ENCODE measurements at regions of chr10 and their contacts with region 1.

Region 1: GRCh38 chr10:103327906-103328305 is 23.0 kb downstream of the PCGF6 start:
- DNase-seq: no peak
- ATAC-seq: no peak
- H3K4me3 ChIP-seq: no peak overlapping the region
- H3K27ac ChIP-seq: no peak overlapping the region
- H3K4me1 ChIP-seq: no peaks in the 10 kb centered on the region
- H3K27me3 ChIP-seq: no peaks in the 10 kb centered on the region
- CTCF ChIP-seq: no peak

Region 2: DNA sequence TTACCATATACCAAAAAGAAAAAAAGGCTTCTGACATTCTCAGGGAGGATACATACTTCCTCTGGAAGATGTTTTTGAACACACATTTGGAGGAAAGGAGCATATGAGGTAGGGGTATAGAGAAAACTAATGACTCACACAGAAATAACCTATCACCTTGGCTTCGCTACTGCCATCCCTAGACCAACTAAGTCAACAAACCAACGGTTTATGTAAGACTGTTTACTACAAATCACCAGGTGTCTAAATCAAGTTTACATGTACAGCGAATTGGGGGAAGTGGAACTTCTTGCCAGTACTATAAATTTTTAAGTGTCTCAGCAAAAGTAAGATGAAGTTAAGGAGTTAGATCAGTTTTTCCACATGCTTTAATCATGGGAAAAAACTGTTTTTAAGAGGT is 231.8 kb before region 1 on chr10:
- intact Hi-C with region 1: loop called in 1 of 2 experiments (anchors 10 kb)
- DNase-seq: no peak
- ATAC-seq: no peak
- H3K4me3 ChIP-seq: no peak overlapping the region
- H3K27ac ChIP-seq: no peak overlapping the region
- H3K4me1 ChIP-seq: no peaks in the 10 kb centered on the region
- H3K27me3 ChIP-seq: no peaks in the 10 kb centered on the region
- CTCF ChIP-seq: no peak

Region 3: GRCh38 chr10:103427866-103428265 is 100.0 kb after region 1 on chr10:
- intact Hi-C with region 1: no loop called
- DNase-seq: no peak
- ATAC-seq: peak; percentile 37 to 88 (median 70)
- H3K4me3 ChIP-seq: no peak overlapping the region
- H3K27ac ChIP-seq: peak overlapping the region; percentile 53
- H3K4me1 ChIP-seq: no peaks in the 10 kb centered on the region
- H3K27me3 ChIP-seq: no peaks in the 10 kb centered on the region
- CTCF ChIP-seq: no peak

Measured in psoas muscle (tissue), 8 donors.